ENCODE measurements at regions of chr7 and their contacts with region 1.

Region 1: GRCh38 chr7:155380221-155380861 is 77.6 kb upstream of the EN2 start:
- DNase-seq: peak; percentile 51
- ATAC-seq: peak; percentile 92
- H3K4me3 Mint-ChIP-seq: no peak overlapping the region
- H3K27ac Mint-ChIP-seq: no peak overlapping the region
- H3K4me1 Mint-ChIP-seq: peaks cover 41% of the 10 kb centered on the region
- H3K27me3 Mint-ChIP-seq: peaks cover 80% of the 10 kb centered on the region
- CTCF ChIP-seq: peak; percentile 31

Region 2: DNA sequence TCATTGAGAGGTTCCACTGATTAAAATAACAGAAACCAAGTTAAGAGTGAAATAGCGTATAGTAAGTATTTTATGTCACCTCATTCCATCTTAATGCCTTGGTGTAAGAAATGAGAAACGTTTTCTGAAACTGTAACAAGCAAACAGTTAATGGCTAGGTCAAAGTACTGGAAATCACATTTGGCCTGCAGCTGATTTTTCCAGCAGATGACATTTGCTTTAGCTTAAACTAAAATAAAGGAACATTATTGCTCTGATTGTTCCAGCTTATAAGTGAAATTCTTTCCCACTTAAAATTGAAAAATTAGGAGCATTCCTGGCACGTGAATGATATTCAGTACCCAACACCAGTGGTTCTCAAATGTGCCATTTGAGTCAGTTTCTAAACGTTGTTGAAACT is 1541.8 kb before region 1 on chr7:
- CTCF ChIA-PET with region 1: no interaction called
- POLR2A ChIA-PET with region 1: no interaction called
- intact Hi-C with region 1: no loop called
- DNase-seq: no peak
- ATAC-seq: no peak
- H3K4me3 Mint-ChIP-seq: no peak overlapping the region
- H3K27ac Mint-ChIP-seq: no peak overlapping the region
- H3K4me1 Mint-ChIP-seq: no peaks in the 10 kb centered on the region
- H3K27me3 Mint-ChIP-seq: no peaks in the 10 kb centered on the region
- CTCF ChIP-seq: no peak

Region 3: GRCh38 chr7:155506854-155507337 is 126.6 kb after region 1 on chr7:
- CTCF ChIA-PET with region 1: no interaction called
- POLR2A ChIA-PET with region 1: no interaction called
- intact Hi-C with region 1: loop called (anchors 2 kb)
- DNase-seq: no peak
- ATAC-seq: no peak
- H3K4me3 Mint-ChIP-seq: no peak overlapping the region
- H3K27ac Mint-ChIP-seq: no peak overlapping the region
- H3K4me1 Mint-ChIP-seq: peaks cover 13% of the 10 kb centered on the region
- H3K27me3 Mint-ChIP-seq: peaks cover 68% of the 10 kb centered on the region
- CTCF ChIP-seq: no peak

Region 4: GRCh38 chr7:155533827-155534690 is 153.7 kb after region 1 on chr7:
- CTCF ChIA-PET with region 1: no interaction called
- POLR2A ChIA-PET with region 1: no interaction called
- intact Hi-C with region 1: loop called (anchors 1 kb)
- DNase-seq: no peak
- ATAC-seq: peak; percentile 65
- H3K4me3 Mint-ChIP-seq: peak overlapping the region; percentile 69
- H3K27ac Mint-ChIP-seq: no peak overlapping the region
- H3K4me1 Mint-ChIP-seq: peaks cover 15% of the 10 kb centered on the region
- H3K27me3 Mint-ChIP-seq: peaks cover 66% of the 10 kb centered on the region
- CTCF ChIP-seq: no peak

Region 5: GRCh38 chr7:155738652-155739537 is 358.6 kb after region 1 on chr7:
- CTCF ChIA-PET with region 1: no interaction called
- POLR2A ChIA-PET with region 1: no interaction called
- intact Hi-C with region 1: loop called (anchors 1 kb)
- DNase-seq: peak; percentile 42
- ATAC-seq: peak; percentile 64
- H3K4me3 Mint-ChIP-seq: no peak overlapping the region
- H3K27ac Mint-ChIP-seq: no peak overlapping the region
- H3K4me1 Mint-ChIP-seq: peaks cover 58% of the 10 kb centered on the region
- H3K27me3 Mint-ChIP-seq: no peaks in the 10 kb centered on the region
- CTCF ChIP-seq: peak; percentile 30

Region 6: DNA sequence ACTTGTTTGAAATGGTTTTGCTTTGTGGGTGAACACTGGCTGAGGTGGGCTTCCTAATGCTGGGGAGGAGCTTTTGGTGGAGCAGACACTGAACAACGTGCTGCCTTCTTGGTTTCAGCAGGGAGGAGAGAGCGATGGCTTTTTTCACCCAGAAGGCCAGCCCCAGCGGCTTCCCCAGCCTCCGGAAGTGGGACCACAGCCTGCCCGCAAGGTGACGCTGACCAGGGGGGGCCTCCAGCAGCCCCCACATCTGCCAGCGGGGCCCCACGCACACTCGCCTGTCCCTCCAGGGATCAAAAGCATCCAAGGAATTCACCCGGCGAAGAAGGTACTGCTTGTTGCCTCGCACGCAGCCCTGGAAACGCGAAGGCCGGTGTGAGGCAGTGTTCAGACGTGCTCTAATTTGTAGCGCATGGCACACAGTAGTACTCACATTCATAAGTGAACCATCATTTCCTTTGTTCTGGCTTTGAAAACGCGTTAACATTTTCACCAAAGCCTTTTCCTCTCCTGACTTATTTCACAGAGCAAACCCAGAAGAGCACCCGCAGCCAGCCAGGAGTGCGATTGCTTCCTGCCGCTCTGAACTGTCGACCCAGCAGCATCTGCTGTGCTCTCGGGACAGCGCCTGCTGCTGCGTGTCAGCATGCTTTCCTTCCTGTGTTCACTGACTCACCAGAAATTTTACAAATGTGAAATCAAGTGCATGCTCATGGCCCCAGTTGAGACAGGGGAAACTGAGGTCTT is 383.5 kb after region 1 on chr7:
- CTCF ChIA-PET with region 1: interaction called, 3 read pairs
- POLR2A ChIA-PET with region 1: no interaction called
- intact Hi-C with region 1: loop called (anchors 1 kb)
- DNase-seq: no peak
- ATAC-seq: peak; percentile 54
- H3K4me3 Mint-ChIP-seq: peak overlapping the region; percentile 61
- H3K27ac Mint-ChIP-seq: peak overlapping the region; percentile 85
- H3K4me1 Mint-ChIP-seq: peaks cover 38% of the 10 kb centered on the region
- H3K27me3 Mint-ChIP-seq: no peaks in the 10 kb centered on the region
- CTCF ChIP-seq: no peak

Region 7: GRCh38 chr7:155804897-155805825 is 424.8 kb after region 1 on chr7:
- CTCF ChIA-PET with region 1: no interaction called
- POLR2A ChIA-PET with region 1: no interaction called
- intact Hi-C with region 1: loop called (anchors 5 kb)
- DNase-seq: peak; percentile 63
- ATAC-seq: peak; percentile 77
- H3K4me3 Mint-ChIP-seq: peak overlapping the region; percentile 78
- H3K27ac Mint-ChIP-seq: no peak overlapping the region
- H3K4me1 Mint-ChIP-seq: peaks cover 26% of the 10 kb centered on the region
- H3K27me3 Mint-ChIP-seq: peaks cover 50% of the 10 kb centered on the region
- CTCF ChIP-seq: no peak

Region 8: DNA sequence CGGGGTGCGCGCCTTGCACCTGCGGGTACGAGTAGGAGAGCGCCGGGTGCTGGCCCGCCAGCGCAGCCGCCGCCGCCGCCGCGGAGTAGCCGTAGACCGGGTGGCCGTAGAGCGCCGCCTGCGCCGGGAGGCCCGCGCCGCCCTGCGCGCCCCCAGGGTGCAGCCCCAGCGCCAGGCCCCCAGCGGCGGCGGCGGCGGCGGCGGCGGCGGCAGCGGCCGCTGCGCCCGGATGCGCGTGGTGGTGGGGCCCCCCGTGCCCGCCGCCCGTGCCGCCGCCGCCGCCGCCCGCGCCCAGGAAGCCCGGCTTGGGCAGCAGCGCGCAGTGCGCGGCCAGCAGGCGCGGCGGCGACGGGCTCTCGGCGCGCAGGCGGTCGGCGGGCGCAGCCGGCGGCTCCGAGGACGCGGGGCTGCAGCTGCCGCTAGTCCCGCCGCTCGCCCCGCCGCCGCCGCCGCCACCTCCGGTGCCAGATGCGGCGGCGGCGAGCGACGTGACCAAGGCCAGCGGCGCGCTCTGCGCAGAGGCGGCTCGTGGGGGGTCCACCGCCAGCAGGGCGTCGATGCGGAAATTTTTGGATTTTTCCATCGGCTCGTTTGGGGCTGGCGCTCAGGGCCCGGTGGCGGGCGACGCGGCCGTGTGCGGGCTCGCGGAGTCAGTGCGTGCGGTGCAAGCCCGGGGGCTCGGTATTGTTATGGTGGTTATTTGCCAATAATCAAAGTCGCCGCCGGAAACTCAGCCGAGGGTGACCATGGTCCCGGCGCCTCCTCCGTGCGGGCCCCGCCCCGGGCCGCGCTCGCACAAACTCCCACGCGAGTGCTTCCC is 1629.6 kb after region 1 on chr7:
- CTCF ChIA-PET with region 1: no interaction called
- POLR2A ChIA-PET with region 1: no interaction called
- intact Hi-C with region 1: loop called (anchors 5 kb)
- DNase-seq: no peak
- ATAC-seq: peak; percentile 38
- H3K4me3 Mint-ChIP-seq: peak overlapping the region; percentile 50
- H3K27ac Mint-ChIP-seq: no peak overlapping the region
- H3K4me1 Mint-ChIP-seq: peaks cover 23% of the 10 kb centered on the region
- H3K27me3 Mint-ChIP-seq: peaks cover 54% of the 10 kb centered on the region
- CTCF ChIP-seq: no peak

Measured in activated B cell treated with CpG ODN at 0.5 μM for 24 hours (primary cell).